Adrenal gland (tissue), 19 donors: ENCODE measurements at regions of chr5 and their contacts with region 1.

Region 1: GRCh38 chr5:39547553-39548154 is 122.9 kb upstream of the DAB2 start:
- DNase-seq: peak in 5 of 7 donors; percentile 32 to 66 (median 50)
- H3K4me3 ChIP-seq: peak overlapping the region in 1 of 4 donors; percentile 45
- H3K27ac ChIP-seq: no peak overlapping the region
- H3K4me1 ChIP-seq: no peaks in the 10 kb centered on the region
- H3K27me3 ChIP-seq: no peaks in the 10 kb centered on the region
- CTCF ChIP-seq: peak; percentile 42 to 86 (median 80)
- POLR2A ChIP-seq: no peak

Region 2: GRCh38 chr5:39376293-39376714 is 171.3 kb before region 1 on chr5:
- intact Hi-C with region 1: loop called (anchors 5 kb)
- DNase-seq: peak in 3 of 7 donors; percentile 38 to 54 (median 53)
- H3K4me3 ChIP-seq: no peak overlapping the region
- H3K27ac ChIP-seq: peak overlapping the region in 1 of 5 donors; percentile 16
- H3K4me1 ChIP-seq: no peaks in the 10 kb centered on the region
- H3K27me3 ChIP-seq: no peaks in the 10 kb centered on the region
- CTCF ChIP-seq: peak; percentile 47 to 76 (median 68)
- POLR2A ChIP-seq: no peak

Region 3: GRCh38 chr5:39424736-39425637 is 122.7 kb before region 1 on chr5 and contains the start of gene DAB2:
- intact Hi-C with region 1: loop called in 1 of 2 experiments (anchors 5 kb)
- DNase-seq: peak; percentile 89 to 96 (median 94)
- H3K4me3 ChIP-seq: peak within 1 kb of the TSS; percentile 39 to 76 (median 59)
- H3K27ac ChIP-seq: peak within 1 kb of the TSS; percentile 68 to 91 (median 86)
- H3K4me1 ChIP-seq: peaks cover 37 to 55% of the 10 kb centered on the region in 2 donors
- H3K27me3 ChIP-seq: no peaks in the 10 kb centered on the region
- CTCF ChIP-seq: peak; percentile 37 to 64 (median 60)
- POLR2A ChIP-seq: peak; percentile 91 to 98
- total RNA-seq, gene DAB2: 96.1 to 418 (median 222) TPM